Ovary (tissue), 10 donors: ENCODE measurements at regions of chr12 and their contacts with region 1.

Region 1: DNA sequence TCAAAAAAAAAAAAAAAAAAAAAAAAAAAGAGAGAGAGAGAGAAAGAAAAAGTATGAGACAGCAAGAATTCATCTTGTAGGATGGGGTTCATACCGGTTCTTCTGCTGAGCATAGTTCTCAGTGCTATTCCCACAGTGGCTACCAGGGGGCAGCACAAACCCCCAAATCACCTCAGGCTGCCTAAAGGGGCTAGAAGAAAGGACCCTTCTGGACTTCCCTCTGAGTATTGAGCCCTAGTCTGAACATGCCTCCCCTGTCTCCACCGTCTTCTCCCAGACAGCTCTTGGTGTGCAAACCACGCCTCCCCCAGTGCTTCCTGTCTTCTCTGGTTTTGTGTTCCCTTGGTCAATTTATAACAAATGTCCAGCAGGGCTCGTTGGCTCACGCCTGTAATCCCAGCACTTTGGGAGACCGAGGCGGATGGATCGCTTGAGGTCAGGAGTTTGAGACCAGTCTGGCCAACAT is 31.3 kb upstream of the SMUG1 start:
- DNase-seq: peak; percentile 66 to 86 (median 84)
- H3K4me3 ChIP-seq: no peak overlapping the region
- H3K27ac ChIP-seq: no peak overlapping the region
- H3K4me1 ChIP-seq: peaks cover 4% of the 10 kb centered on the region
- H3K27me3 ChIP-seq: no peaks in the 10 kb centered on the region
- CTCF ChIP-seq: peak; percentile 51 to 89 (median 86)
- EP300 ChIP-seq: no peak
- POLR2A ChIP-seq: no peak

Region 2: DNA sequence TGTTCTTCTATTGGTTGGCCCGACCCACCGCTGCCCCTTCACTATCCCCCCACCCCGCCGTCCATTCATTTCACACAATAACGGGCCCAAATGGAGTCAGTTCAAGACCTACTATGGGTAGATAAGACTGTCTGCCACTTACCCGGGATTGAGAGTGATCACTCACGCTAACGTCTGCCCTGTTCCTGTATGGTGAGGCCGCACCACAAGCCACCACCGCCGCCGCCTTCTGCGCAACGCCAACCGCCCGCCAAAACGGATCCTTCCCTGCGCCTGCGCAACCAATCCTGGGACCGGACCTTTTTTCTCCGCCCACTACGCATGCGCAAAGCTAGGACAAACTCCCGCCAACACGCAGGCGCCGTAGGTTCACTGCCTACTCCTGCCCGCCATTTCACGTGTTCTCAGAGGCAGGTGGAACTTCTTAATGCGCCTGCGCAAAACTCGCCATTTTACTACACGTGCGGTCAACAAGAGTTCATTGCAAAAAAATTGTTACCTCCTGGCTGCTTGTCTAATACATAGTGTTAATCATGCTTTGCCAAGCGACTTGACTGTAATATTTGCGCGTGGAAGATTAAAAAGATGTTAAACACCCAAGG is 59.8 kb after region 1 on chr12 and contains the start of gene CBX5:
- intact Hi-C with region 1: loop called in 1 of 4 experiments (anchors 10 kb)
- DNase-seq: peak; percentile 99 to 100 (median 100)
- H3K4me3 ChIP-seq: peak within 1 kb of the TSS; percentile 65
- H3K27ac ChIP-seq: peak within 1 kb of the TSS; percentile 89 to 96
- H3K4me1 ChIP-seq: peaks cover 6% of the 10 kb centered on the region
- H3K27me3 ChIP-seq: no peaks in the 10 kb centered on the region
- CTCF ChIP-seq: peak in 1 of 3 donors; percentile 8
- EP300 ChIP-seq: peak; percentile 85
- POLR2A ChIP-seq: peak; percentile 91
- total RNA-seq, gene CBX5: 30.3 to 119 (median 103) TPM

Region 3: GRCh38 chr12:54579696-54580333 is 359.7 kb after region 1 on chr12:
- intact Hi-C with region 1: no loop called
- DNase-seq: peak; percentile 79 to 94 (median 90)
- H3K4me3 ChIP-seq: no peak overlapping the region
- H3K27ac ChIP-seq: peak overlapping the region in 1 of 2 donors; percentile 16
- H3K4me1 ChIP-seq: peaks cover 1% of the 10 kb centered on the region
- H3K27me3 ChIP-seq: no peaks in the 10 kb centered on the region
- CTCF ChIP-seq: peak; percentile 95 to 97 (median 95)
- EP300 ChIP-seq: no peak
- POLR2A ChIP-seq: no peak